HCT116 (cell line): ENCODE measurements at regions of chr16 and their contacts with region 1.

Region 1: DNA sequence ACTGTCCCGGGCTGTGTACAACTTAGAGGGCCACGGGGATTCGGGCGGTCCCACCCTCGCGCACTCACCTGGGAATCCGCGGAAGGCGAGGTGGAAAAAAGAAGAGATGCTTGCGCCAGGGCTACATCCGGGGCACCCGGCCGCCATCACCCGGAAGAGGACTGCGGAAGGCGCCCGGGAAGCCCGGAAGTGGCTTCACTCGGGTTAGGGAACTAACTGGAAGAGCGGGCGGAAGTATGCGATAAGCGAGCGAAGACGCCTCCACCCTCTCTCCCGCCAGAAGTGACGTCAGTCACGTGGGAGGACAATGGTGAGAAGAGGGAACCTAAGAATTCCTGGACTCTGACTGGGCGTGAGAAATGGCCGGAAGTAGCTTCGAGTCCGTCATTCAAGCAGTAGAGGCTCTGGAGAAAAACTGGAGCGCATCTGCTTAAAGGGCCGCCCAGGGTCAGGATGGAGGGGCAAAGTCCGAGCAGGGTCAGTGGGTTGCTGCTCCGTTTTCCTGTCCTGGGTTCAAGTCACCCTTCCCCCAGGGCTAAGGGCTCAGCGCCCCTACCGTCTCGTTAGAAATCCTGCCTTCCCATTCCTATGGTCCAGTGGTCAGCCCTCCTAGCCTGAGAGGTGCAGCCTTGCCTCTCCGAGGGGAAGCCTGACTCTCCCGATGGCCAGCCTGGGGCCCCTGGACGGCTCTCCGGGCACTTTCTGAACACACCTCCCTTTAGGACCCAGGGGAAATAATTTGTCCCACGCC is at the start of gene CD2BP2:
- DNase-seq: peak; percentile 99
- ATAC-seq: peak; percentile 81
- H3K4me3 ChIP-seq: peak within 1 kb of the TSS; percentile 86 to 92
- H3K27ac ChIP-seq: peak within 1 kb of the TSS; percentile 92
- H3K4me1 ChIP-seq: peaks cover 39 to 54% of the 10 kb centered on the region in 2 experiments
- H3K27me3 ChIP-seq: no peaks in the 10 kb centered on the region
- CTCF ChIP-seq: 0 out of 6 replicates have a peak, but pooled peaks of 1 of the 3 experiments have one; percentile 18
- POLR2A ChIP-seq: no peak
- RAD21 ChIP-seq: no peak; the same call in 1 of the 2 replicates
- total RNA-seq, gene CD2BP2: 51.8 TPM

Region 2: DNA sequence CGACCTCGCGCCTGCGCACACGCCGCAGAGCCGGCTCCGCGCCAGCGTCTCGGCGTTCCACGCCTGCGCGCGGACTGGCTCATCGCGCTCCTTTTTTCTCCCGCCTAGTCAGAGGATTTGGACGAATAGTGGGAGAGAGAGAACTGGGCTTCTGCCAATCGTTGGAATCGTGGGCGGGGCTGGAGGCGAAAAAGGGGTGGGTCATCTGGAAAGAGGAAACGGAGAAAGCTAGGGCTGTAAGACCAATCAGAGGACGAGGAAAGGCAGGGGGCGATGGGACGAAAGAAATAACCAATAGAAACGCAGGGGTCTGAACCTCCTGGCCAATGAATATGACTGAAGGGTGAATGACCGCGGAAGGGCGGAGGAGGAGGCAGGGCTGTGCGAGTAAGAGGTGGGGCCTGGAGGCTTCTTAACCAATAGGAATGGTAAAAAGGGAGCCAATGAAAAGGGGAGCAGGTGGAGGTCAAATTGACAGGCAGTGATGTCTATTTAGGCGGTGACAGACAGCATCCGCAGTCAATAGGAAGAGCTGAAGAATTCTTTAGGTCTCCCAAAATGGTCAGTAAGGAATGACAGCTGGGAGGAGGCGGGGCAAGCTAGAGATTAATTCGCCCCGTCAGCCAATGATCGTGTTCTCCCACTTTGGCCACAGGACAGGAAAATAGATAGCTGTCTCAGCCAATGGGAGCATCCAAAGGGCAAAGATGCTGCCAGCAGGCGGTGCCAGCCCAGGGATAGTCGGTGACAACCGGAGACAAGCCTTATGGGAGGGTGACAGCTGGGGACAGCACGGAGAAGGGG is 15.3 kb after region 1 on chr16 and contains the start of gene TBC1D10B:
- CTCF ChIA-PET with region 1: interaction called, 7 read pairs
- POLR2A ChIA-PET with region 1: interaction called, 15 read pairs
- RAD21 ChIA-PET with region 1: no interaction called
- intact Hi-C with region 1: no loop called
- DNase-seq: peak; percentile 100
- ATAC-seq: peak; percentile 88
- H3K4me3 ChIP-seq: peak within 1 kb of the TSS; percentile 79 to 87
- H3K27ac ChIP-seq: peak within 1 kb of the TSS; percentile 84
- H3K4me1 ChIP-seq: peaks cover 18 to 30% of the 10 kb centered on the region in 2 experiments
- H3K27me3 ChIP-seq: no peaks in the 10 kb centered on the region
- CTCF ChIP-seq: peak in 1 of 3 experiments; percentile 30; a peak in 1 of 6 replicates
- POLR2A ChIP-seq: no peak
- RAD21 ChIP-seq: no peak
- total RNA-seq, gene TBC1D10B: 49.2 TPM

Region 3: GRCh38 chr16:30395155-30395991 is 40.1 kb after region 1 on chr16 and contains the start of gene ZNF48:
- CTCF ChIA-PET with region 1: no interaction called
- POLR2A ChIA-PET with region 1: no interaction called
- RAD21 ChIA-PET with region 1: interaction called in 1 of 2 experiments, 4 read pairs
- intact Hi-C with region 1: loop called (anchors 1 kb)
- DNase-seq: peak; percentile 77
- ATAC-seq: peak; percentile 83
- H3K4me3 ChIP-seq: peak within 1 kb of the TSS; percentile 95 to 96
- H3K27ac ChIP-seq: peak within 1 kb of the TSS; percentile 97
- H3K4me1 ChIP-seq: peaks cover 27 to 50% of the 10 kb centered on the region in 2 experiments
- H3K27me3 ChIP-seq: no peaks in the 10 kb centered on the region
- CTCF ChIP-seq: peak in 1 of 3 experiments; percentile 28; a peak in 2 of 6 replicates
- POLR2A ChIP-seq: no peak
- RAD21 ChIP-seq: peak; percentile 33; the same call in 1 of the 2 replicates
- total RNA-seq, gene ZNF48: 17.9 TPM